Right ventricle myocardium inferior (tissue), 1 donor: ENCODE measurements at regions of chr16 and their contacts with region 1.

Region 1: GRCh38 chr16:72938795-72939164 is 109.1 kb downstream of the ZFHX3 start:
- DNase-seq: peak; percentile 97
- ATAC-seq: peak; percentile 96

Region 2: GRCh38 chr16:72856797-72857196 is 82.0 kb before region 1 on chr16:
- intact Hi-C with region 1: loop called (anchors 10 kb)
- DNase-seq: no peak
- ATAC-seq: no peak

Region 3: GRCh38 chr16:72878301-72879269 is 60.2 kb before region 1 on chr16:
- intact Hi-C with region 1: no loop called
- DNase-seq: no peak
- ATAC-seq: peak; percentile 51

Region 4: DNA sequence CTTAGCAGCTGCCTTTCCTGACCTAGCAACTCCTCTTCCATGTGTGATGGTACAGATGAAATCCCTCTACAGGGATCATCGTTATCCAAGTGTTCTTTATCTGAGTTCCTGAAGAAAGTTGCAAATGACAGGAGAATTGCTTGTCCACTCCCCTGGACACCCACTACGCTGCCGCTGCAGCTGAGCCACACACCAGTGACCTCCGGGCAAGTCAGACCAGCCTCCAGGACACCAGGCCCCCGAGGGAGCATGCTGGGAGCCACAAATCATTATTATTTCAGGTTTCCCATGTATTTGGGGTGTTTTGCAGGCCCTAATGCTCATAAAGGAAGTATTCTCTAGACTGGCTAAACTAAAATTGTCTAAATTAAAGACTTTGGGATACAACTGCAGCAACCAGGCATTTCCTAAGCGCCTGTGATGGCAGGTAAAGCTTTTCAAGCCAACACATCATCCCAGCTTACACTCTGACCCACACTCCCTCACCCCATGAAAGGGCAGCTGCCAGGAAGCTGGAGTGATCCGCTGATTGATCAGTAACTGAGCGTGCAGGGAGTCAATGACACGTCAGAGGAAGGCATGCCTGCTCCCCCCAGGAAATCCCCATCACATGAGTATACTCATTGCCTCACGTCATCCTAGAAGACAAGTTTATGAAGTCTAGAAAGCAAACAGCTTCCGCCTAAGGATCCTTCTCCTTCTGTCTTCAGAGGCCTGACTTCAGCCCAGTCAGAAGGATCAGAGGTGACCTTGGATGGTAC is 1821.4 kb after region 1 on chr16:
- intact Hi-C with region 1: no loop called
- DNase-seq: no peak
- ATAC-seq: no peak